ENCODE measurements at regions of chr2 and their contacts with region 1.

Region 1: DNA sequence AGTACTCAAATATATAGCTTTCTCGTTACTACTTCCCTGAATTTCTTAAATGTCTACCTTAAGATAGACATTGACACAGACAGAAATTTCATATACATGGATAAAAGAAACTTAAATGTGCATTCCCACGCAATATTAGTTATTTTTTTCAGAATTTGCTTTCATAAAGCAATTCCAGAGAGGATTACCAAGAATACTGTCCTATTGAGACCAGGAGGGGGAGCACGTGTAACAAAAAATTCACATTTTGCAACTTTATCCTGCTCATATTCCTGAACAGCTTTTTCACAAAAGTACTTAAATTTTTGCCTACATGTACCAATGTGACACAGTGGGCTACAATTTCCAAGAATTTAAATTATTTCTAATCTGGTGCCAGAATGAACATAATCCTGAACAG is 30.7 kb upstream of the ERCC3 start:
- DNase-seq: no peak
- H3K4me3 ChIP-seq: no peak overlapping the region
- H3K27ac ChIP-seq: no peak overlapping the region
- H3K4me1 ChIP-seq: no peaks in the 10 kb centered on the region
- H3K27me3 ChIP-seq: no peaks in the 10 kb centered on the region
- CTCF ChIP-seq: peak; percentile 41

Region 2: GRCh38 chr2:127408004-127408806 is 83.6 kb after region 1 on chr2:
- intact Hi-C with region 1: no loop called
- DNase-seq: peak; percentile 92
- H3K4me3 ChIP-seq: peak overlapping the region; percentile 54
- H3K27ac ChIP-seq: peak overlapping the region; percentile 87
- H3K4me1 ChIP-seq: no peaks in the 10 kb centered on the region
- H3K27me3 ChIP-seq: no peaks in the 10 kb centered on the region
- CTCF ChIP-seq: no peak

Region 3: DNA sequence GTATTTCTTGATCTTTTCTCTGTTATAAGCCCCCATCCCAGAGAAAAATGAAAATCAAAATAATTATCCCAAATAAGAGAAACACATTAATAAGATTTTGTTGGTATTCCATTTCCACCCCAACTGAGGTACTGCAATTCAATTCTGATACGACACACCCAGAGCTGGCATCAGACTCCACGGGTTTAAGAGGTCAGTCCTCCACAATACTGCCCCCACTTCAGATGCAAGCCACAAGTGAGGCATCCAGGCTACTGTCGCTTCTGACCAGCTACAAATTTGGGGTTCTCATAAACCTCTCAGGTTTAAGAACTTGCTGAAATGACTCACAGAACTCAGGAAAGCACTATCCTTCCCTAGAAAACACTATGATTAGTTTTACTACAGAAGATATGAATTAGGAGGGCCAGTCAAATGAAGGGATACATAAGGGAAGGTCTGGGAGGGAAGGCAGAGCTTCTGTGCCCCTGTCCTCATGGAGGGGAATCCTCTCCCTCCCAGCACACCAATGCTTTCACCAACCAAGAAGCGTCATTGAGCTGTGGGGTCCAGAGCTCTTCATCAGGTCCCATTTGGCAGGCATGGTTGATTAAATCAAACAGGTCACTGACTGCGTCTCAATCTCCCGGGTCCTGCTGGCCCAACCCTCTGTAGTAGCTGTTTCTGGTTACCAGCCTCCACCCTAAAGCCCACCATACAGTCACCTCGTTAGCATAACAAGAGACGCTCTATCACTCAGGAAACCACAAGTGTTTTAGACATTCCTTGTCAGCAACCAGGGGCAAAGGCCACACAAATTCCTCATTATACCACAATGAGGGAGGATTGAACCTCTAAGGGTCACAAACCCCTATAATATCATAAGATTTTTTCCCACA is 155.5 kb after region 1 on chr2:
- intact Hi-C with region 1: loop called (anchors 5 kb)
- DNase-seq: no peak
- H3K4me3 ChIP-seq: no peak overlapping the region
- H3K27ac ChIP-seq: no peak overlapping the region
- H3K4me1 ChIP-seq: no peaks in the 10 kb centered on the region
- H3K27me3 ChIP-seq: no peaks in the 10 kb centered on the region
- CTCF ChIP-seq: no peak